Right cardiac atrium (tissue), 5 donors: ENCODE measurements at regions of chr2 and their contacts with region 1.

Region 1: DNA sequence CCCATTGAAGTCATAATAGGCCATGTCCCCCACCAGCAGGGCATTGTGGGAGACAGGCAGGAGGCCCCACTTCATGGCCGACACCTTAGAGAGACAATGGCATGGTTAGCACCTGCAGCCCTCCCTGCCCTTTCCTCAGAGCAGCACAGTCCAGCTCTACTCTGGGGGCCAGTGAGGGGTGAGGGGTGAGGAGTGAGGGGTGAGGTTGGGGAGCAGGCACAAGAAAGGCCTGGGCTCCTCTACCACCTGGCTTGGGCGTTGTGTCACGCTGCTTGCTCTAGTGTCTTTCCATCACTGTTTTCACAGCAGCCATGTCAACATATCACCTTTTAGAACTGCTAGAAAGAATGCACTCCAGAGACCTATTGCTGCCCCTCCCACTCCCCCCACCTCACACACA is 77.2 kb downstream of the ADD2 start:
- DNase-seq: no peak
- ATAC-seq: no peak
- H3K4me3 ChIP-seq: no peak overlapping the region
- H3K27ac ChIP-seq: no peak overlapping the region
- H3K4me1 ChIP-seq: no peaks in the 10 kb centered on the region
- H3K27me3 ChIP-seq: no peaks in the 10 kb centered on the region

Region 2: DNA sequence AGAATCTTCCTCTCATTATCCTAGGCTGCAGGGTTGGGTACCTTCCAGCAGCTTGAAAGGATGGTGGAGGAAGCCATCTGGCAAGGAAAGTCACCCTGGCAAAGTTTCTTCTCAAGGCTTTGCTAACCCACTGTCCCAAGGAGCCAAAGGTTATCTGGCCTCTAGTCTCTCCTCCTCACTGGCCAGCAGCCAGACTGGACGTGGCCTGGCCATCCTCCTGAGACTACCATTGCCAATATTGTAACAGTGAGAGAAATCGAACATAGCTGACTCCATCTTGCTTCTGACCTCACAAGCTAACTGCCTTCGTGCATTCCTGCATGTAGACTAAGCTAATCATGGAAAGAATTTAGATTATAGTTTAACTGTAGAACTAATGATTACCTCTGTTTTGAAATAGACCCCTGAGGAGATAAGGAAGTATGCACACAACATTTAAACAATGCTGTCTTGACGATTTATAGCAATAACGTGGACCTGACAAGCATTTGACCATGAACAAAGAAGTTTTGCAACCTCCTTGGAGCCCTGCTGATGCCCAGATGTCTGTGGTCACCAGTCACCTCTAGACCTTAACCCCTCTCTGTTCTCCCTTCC is 956.7 kb before region 1 on chr2:
- intact Hi-C with region 1: no loop called
- DNase-seq: peak in 2 of 3 donors; percentile 24 to 66
- ATAC-seq: peak; percentile 34 to 57
- H3K4me3 ChIP-seq: no peak overlapping the region
- H3K27ac ChIP-seq: no peak overlapping the region
- H3K4me1 ChIP-seq: peaks cover 5% of the 10 kb centered on the region
- H3K27me3 ChIP-seq: no peaks in the 10 kb centered on the region

Region 3: DNA sequence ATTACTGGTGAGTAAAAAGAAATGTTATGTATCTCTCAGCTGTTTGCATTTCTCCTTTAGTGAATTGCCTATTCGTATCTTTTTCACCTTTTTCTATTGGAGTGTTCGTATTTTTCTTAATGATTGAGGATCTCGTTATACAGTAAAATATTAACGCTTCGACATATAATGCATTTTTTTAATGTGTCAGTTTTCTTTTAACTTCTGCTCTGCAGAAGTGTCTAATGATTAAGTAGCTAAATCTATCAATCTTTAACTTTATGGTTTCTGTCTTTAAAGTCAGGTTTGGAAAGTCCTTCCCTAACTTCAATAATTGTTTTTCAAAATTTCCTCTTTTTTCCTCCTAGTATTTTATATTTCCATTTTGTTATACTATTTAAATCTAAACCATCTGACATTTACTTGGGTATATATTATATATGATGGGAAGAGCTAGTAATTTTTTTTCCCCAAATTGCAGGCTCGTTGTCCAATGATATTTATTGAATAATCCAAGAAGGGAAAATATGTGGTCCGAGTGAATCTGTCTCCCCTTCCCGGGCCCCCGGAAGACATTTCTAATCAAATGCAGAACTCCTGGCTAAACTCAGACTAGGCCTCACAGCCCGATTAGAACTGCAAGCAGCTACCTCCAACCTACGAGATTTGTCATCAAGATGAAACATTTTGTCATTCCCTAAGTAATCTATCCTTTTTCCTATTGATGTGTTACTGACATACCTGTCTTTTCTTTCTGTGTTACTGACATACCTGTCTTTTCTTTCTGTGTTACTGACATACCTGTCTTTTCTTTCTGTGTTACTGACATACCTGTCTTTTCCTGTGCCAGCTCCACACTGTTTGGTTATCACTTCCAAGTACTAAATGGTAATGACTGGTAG is 586.4 kb before region 1 on chr2:
- intact Hi-C with region 1: no loop called
- DNase-seq: peak in 1 of 3 donors; percentile 50
- ATAC-seq: no peak
- H3K4me3 ChIP-seq: no peak overlapping the region
- H3K27ac ChIP-seq: no peak overlapping the region
- H3K4me1 ChIP-seq: peaks cover 2% of the 10 kb centered on the region
- H3K27me3 ChIP-seq: no peaks in the 10 kb centered on the region

Region 4: GRCh38 chr2:70984576-70985282 is 293.9 kb after region 1 on chr2:
- intact Hi-C with region 1: loop called in 1 of 4 experiments (anchors 5 kb)
- DNase-seq: peak; percentile 59 to 86 (median 80)
- ATAC-seq: peak; percentile 66 to 81
- H3K4me3 ChIP-seq: no peak overlapping the region
- H3K27ac ChIP-seq: no peak overlapping the region
- H3K4me1 ChIP-seq: no peaks in the 10 kb centered on the region
- H3K27me3 ChIP-seq: no peaks in the 10 kb centered on the region